Sciatic nerve (tissue), 2 donors: ENCODE measurements at regions of chr2 and their contacts with region 1.

Region 1: GRCh38 chr2:66275984-66276383 is 158.9 kb upstream of the MEIS1 start:
- DNase-seq: no peak
- ATAC-seq: no peak

Region 2: DNA sequence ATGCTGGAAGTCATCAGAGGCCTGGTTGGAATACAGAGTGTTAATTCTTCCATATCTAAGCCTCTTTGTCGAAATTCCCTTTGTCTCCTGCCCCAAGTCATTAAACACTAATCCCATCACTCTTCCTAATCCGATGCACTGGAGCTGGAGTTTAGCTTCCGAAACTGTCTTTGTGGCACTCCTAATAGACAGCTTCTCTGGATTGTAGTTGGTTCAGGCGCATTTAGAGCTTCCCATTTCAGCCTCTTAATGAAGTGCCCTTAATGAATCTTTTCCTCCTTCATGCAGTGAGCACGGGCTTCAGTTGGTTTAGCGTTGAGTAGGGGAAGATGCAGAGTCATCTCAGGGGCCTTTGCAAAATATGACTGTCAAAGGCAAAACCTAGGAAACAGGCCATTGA is 86.7 kb after region 1 on chr2:
- intact Hi-C with region 1: no loop called
- DNase-seq: no peak
- ATAC-seq: no peak

Region 3: GRCh38 chr2:66661253-66662173 is 385.5 kb after region 1 on chr2:
- intact Hi-C with region 1: loop called (anchors 5 kb)
- DNase-seq: no peak
- ATAC-seq: no peak